ENCODE measurements at regions of chr22 and their contacts with region 1.

Region 1: GRCh38 chr22:22558972-22559603 is at the start of gene PRAME:
- DNase-seq: peak; percentile 100
- ATAC-seq: peak; percentile 92
- H3K4me3 ChIP-seq: peak within 1 kb of the TSS; percentile 54
- H3K27ac ChIP-seq: peak within 1 kb of the TSS; percentile 78
- H3K4me1 ChIP-seq: peaks cover 39 to 43% of the 10 kb centered on the region in 2 experiments
- H3K27me3 ChIP-seq: no peaks in the 10 kb centered on the region; a peak in 1 of 5 replicates
- CTCF ChIP-seq: no peak
- EP300 ChIP-seq: no peak
- POLR2A ChIP-seq: no peak
- RAD21 ChIP-seq: no peak
- polyA plus RNA-seq, gene PRAME: 662 to 1,142 TPM

Region 2: DNA sequence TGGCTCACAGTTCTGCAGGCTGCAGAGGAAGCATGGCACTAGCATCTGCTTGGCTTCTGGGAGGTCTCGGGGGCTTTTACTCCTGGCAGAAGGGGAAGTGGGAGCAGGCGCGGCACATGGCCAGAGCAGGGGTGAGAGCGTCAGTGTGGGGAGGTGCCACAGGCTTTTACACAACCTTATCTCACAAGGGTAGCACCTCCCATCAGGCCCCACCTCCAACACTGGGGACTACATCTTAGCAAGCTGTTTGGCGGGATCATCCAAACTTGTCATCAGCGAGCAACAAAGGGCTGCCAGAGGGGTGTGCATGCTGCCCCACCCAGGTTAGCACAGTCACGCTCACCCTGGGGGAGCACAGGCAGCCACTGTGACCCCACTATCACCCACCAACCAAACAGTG is 804.6 kb before region 1 on chr22:
- CTCF ChIA-PET with region 1: no interaction called
- POLR2A ChIA-PET with region 1: no interaction called
- in situ Hi-C with region 1: no loop called
- intact Hi-C with region 1: loop called (anchors 10 kb)
- DNase-seq: peak; percentile 100
- ATAC-seq: peak; percentile 93
- H3K4me3 ChIP-seq: peak overlapping the region; percentile 4; the same call in 1 of the 2 replicates
- H3K27ac ChIP-seq: peak overlapping the region; percentile 70
- H3K4me1 ChIP-seq: peaks cover 43% of the 10 kb centered on the region in 2 experiments
- H3K27me3 ChIP-seq: no peaks in the 10 kb centered on the region
- CTCF ChIP-seq: no peak
- EP300 ChIP-seq: no peak
- POLR2A ChIP-seq: no peak
- RAD21 ChIP-seq: no peak

Region 3: DNA sequence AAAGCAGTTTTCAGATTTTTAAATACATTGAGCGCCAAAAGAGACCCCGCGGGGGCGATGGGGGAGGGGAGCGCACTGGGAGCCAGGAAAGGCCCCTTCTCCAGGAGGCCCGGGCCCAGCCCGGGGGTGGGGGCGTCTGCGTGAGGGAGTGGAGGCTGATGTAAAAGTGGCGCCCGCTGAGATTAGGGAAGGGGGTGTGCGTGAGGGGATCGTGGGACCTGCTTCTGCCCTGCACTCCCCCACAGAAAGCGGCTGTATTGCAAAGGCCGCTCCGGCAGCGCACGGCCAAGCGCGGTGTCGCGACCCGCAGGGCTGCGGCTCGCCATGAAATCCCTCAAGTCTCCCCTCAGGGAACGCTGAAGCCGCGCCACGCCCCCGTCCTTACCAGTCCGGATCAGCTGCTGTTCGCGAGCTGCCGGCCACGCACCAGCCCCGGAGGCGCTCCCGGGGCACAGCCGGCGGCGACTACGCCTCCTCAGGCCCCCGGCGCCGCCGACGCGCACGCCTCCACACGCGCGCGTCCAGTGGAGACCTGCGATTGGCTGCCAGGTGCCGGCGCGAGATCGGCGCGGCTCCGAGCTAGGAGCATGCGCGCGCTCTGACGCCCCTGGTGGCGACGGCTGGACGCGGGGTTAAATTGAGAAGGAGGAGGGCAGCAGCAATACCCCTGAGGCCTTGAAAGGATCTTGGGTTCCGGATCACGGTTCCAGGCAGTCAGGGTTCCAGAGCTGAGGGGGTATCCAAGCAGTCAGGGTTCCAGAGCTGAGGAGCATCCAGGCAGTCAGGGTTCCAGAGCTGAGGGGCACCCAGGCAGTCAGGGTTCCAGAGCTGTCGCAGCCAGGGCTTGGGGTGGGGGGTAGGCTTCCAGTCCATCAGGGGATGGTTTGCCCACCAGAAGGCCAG is 50.6 kb before region 1 on chr22 and contains the start of gene ZNF280B:
- CTCF ChIA-PET with region 1: interaction called, 18 read pairs
- POLR2A ChIA-PET with region 1: interaction called, 51 read pairs
- in situ Hi-C with region 1: no loop called
- intact Hi-C with region 1: loop called (anchors 1 kb)
- DNase-seq: peak; percentile 100
- ATAC-seq: peak; percentile 99
- H3K4me3 ChIP-seq: peak within 1 kb of the TSS; percentile 54
- H3K27ac ChIP-seq: peak within 1 kb of the TSS; percentile 63
- H3K4me1 ChIP-seq: peaks cover 12 to 13% of the 10 kb centered on the region in 2 experiments; a peak in 4 of 5 replicates
- H3K27me3 ChIP-seq: no peaks in the 10 kb centered on the region
- CTCF ChIP-seq: no peak
- EP300 ChIP-seq: no peak
- POLR2A ChIP-seq: no peak
- RAD21 ChIP-seq: no peak
- polyA plus RNA-seq, gene ZNF280B: 24.0 to 29.9 TPM

Region 4: GRCh38 chr22:22576244-22576988 is 17.3 kb after region 1 on chr22:
- CTCF ChIA-PET with region 1: interaction called, 16 read pairs
- POLR2A ChIA-PET with region 1: interaction called, 64 read pairs
- in situ Hi-C with region 1: no loop called
- intact Hi-C with region 1: loop called (anchors 1 kb)
- DNase-seq: peak; percentile 96 to 98 (median 97)
- ATAC-seq: peak; percentile 96
- H3K4me3 ChIP-seq: no peak overlapping the region
- H3K27ac ChIP-seq: no peak overlapping the region
- H3K4me1 ChIP-seq: peaks cover 0 to 14% of the 10 kb centered on the region in 2 experiments; a peak in 3 of 5 replicates
- H3K27me3 ChIP-seq: peaks cover 48 to 60% of the 10 kb centered on the region in 2 experiments
- CTCF ChIP-seq: peak in 1 of 3 experiments; percentile 99; a peak in 2 of 6 replicates
- EP300 ChIP-seq: peak; percentile 75
- POLR2A ChIP-seq: no peak
- RAD21 ChIP-seq: peak in 1 of 2 experiments; percentile 89; a peak in 2 of 4 replicates

Region 5: GRCh38 chr22:22770280-22770871 is 211.3 kb after region 1 on chr22:
- CTCF ChIA-PET with region 1: no interaction called
- POLR2A ChIA-PET with region 1: no interaction called
- in situ Hi-C with region 1: no loop called
- intact Hi-C with region 1: no loop called
- DNase-seq: peak; percentile 96 to 100 (median 98)
- ATAC-seq: peak; percentile 94
- H3K4me3 ChIP-seq: no peak overlapping the region
- H3K27ac ChIP-seq: no peak overlapping the region
- H3K4me1 ChIP-seq: no peaks in the 10 kb centered on the region
- H3K27me3 ChIP-seq: peaks cover 0 to 32% of the 10 kb centered on the region in 2 experiments; a peak in 2 of 5 replicates
- CTCF ChIP-seq: peak in 1 of 3 experiments; percentile 100; a peak in 2 of 6 replicates
- EP300 ChIP-seq: peak; percentile 71
- POLR2A ChIP-seq: no peak
- RAD21 ChIP-seq: no peak

Measured in K562 (cell line).